ENCODE measurements at regions of chr16 and their contacts with region 1.

Region 1: DNA sequence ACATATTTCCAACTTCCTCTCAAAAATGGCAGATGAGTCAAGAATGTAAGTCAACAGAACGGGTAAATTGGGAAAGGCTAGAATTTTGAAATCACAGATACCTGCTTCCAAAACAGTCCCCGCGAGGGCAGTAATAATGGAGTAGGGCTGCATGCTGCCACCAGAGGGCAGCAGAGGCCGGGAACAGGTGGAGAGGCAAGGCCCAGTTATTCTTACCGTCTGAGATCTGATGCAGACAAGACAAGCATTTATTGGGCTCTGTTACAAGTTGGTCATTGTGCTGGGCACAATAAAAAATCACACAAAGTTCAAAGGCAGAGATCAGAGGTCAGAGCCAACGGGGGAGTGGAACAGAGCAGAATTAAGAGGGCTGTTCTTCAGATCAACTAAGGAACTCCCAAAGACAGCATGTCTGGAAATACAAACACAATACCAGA is 8.8 kb upstream of the MLKL start:
- DNase-seq: peak; percentile 87
- H3K4me3 ChIP-seq: no peak overlapping the region
- H3K27ac ChIP-seq: no peak overlapping the region
- H3K4me1 ChIP-seq: no peaks in the 10 kb centered on the region
- H3K27me3 ChIP-seq: no peaks in the 10 kb centered on the region
- CTCF ChIP-seq: peak; percentile 98

Region 2: GRCh38 chr16:74524926-74525325 is 184.5 kb before region 1 on chr16:
- intact Hi-C with region 1: no loop called
- DNase-seq: no peak
- H3K4me3 ChIP-seq: no peak overlapping the region
- H3K27ac ChIP-seq: no peak overlapping the region
- H3K4me1 ChIP-seq: no peaks in the 10 kb centered on the region
- H3K27me3 ChIP-seq: no peaks in the 10 kb centered on the region
- CTCF ChIP-seq: no peak

Region 3: DNA sequence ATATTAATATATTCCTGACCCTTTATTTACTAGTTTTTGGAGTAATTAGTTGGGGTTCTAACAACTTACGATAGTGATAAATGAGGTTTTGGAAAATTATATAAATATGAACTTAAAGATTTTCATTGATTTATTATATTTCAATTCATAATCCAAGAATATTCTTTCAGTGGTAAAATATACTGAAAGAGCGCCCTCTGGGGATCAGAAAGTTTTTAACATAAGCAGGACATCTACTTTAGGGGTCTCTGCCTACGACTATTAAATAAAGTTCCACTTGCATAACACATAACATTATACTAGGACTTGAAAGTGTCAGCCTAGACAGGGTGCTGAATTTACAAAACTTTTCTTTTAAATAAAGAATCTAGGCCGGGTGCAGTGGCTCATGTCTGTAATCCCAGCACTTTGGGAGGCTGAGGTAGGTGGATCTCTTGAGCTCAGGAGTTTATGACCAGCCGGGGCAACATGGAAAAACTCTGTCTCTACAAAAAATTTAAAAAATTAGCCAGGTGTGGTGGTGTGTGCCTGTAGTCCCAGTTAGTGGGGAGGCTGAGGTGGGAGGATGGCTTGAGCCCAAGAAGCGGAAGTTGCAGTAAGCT is 58.4 kb before region 1 on chr16:
- intact Hi-C with region 1: no loop called
- DNase-seq: no peak
- H3K4me3 ChIP-seq: no peak overlapping the region
- H3K27ac ChIP-seq: no peak overlapping the region
- H3K4me1 ChIP-seq: no peaks in the 10 kb centered on the region
- H3K27me3 ChIP-seq: no peaks in the 10 kb centered on the region
- CTCF ChIP-seq: peak; percentile 41

Region 4: GRCh38 chr16:74862741-74863244 is 153.3 kb after region 1 on chr16:
- intact Hi-C with region 1: loop called (anchors 2 kb)
- DNase-seq: no peak
- H3K4me3 ChIP-seq: no peak overlapping the region
- H3K27ac ChIP-seq: no peak overlapping the region
- H3K4me1 ChIP-seq: no peaks in the 10 kb centered on the region
- H3K27me3 ChIP-seq: no peaks in the 10 kb centered on the region
- CTCF ChIP-seq: peak; percentile 83

Measured in colonic mucosa (tissue), 4 donors.